A673 (cell line): ENCODE measurements at regions of chr22 and their contacts with region 1.

Region 1: GRCh38 chr22:42222140-42222539 is 48.3 kb downstream of the TCF20 start:
- DNase-seq: no peak
- H3K4me3 ChIP-seq: no peak overlapping the region
- H3K27ac ChIP-seq: no peak overlapping the region
- H3K4me1 ChIP-seq: peaks cover 10% of the 10 kb centered on the region
- H3K27me3 ChIP-seq: no peaks in the 10 kb centered on the region
- CTCF ChIP-seq: no peak

Region 2: DNA sequence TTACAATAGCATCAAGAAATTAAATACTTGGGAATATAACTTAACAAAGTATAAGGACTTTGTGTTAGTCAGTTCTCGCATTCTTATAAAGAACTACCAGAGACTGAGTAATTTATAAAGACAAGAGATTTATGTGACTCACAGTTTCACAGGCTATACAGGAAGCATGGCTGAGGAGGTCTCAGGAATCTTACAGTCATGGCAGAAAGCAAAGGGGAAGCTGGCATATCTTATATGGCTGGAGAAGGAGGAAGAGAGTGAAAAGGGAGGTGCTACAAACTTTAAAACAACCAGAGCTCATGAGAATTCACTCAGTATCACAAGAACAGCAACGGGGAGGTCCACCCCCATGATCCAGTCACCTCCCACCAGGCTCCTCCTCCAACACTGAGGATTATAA is 453.7 kb before region 1 on chr22:
- CTCF ChIA-PET with region 1: no interaction called
- POLR2A ChIA-PET with region 1: no interaction called
- intact Hi-C with region 1: no loop called
- DNase-seq: peak; percentile 54
- H3K4me3 ChIP-seq: no peak overlapping the region
- H3K27ac ChIP-seq: no peak overlapping the region
- H3K4me1 ChIP-seq: no peaks in the 10 kb centered on the region
- H3K27me3 ChIP-seq: no peaks in the 10 kb centered on the region
- CTCF ChIP-seq: no peak

Region 3: GRCh38 chr22:42172773-42173172 is 49.4 kb before region 1 on chr22:
- CTCF ChIA-PET with region 1: no interaction called
- POLR2A ChIA-PET with region 1: no interaction called
- intact Hi-C with region 1: no loop called
- DNase-seq: peak; percentile 33
- H3K4me3 ChIP-seq: no peak overlapping the region
- H3K27ac ChIP-seq: no peak overlapping the region
- H3K4me1 ChIP-seq: peaks cover 27% of the 10 kb centered on the region
- H3K27me3 ChIP-seq: no peaks in the 10 kb centered on the region
- CTCF ChIP-seq: no peak

Region 4: DNA sequence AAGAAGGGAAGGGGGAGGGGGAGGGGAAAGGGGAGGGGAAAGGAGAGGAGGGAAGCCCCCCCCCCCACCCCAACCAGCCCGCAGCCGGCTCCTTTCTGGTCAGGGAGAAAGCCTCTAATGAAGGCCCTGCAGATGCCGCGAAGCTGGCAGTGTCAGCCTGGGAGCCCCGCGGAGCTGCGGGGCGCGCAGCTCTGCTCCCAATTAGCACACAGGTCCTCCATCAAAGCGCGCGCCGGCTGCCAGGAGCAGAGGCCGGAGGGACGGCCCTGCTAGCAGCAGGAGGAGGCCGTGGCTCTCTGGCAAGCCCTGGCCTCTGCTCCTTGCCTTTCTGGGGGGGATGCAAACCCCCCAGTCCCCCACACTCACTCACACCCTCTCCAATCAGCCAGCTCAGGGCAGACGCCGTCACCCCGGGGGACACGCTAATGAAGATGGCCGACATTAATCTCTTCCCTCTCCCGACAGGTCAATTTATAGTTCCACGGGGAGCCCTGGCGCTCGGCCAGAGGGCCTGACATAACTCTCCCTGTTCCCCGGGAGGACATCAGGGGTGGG is 118.8 kb after region 1 on chr22:
- CTCF ChIA-PET with region 1: no interaction called
- POLR2A ChIA-PET with region 1: interaction called, 13 read pairs
- intact Hi-C with region 1: no loop called
- DNase-seq: no peak
- H3K4me3 ChIP-seq: no peak overlapping the region
- H3K27ac ChIP-seq: no peak overlapping the region
- H3K4me1 ChIP-seq: peaks cover 28% of the 10 kb centered on the region
- H3K27me3 ChIP-seq: no peaks in the 10 kb centered on the region
- CTCF ChIP-seq: no peak